GM18951 (cell line): ENCODE measurements at regions of chr13 and their contacts with region 1.

Region 1: DNA sequence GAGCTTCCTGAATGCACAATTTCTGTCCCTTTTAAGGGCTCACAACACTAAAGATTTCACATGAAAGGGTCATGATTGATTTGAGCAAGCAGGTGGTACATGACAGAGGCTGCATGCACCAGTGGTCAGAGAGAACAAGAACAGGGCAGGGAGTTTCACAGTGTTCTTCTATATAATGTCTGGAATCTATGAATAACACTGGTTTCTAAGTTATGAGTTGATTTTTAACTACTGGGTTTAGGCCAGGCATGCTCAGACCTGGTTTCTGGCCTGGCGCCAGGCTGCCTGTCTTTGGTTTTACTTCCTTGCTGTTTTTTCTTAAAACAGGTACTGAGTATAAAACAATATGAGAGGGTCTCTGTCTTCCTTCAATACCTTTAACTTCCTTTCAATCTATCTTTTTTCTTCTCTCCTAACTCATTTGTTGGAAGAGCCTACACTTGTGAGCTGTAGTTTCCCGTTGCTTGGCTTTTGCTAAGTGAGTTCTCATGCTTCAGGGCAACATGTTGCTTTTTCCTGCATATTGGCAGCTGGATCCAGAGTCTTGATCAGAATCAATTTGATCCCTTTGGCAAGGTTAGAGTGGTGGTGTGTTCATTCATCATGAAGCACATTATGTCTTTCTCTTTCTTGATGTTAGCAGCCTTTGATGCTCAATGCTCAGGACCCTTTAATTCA is 38.5 kb upstream of the FGF14 start:
- POLR2A ChIP-seq: no peak

Region 2: DNA sequence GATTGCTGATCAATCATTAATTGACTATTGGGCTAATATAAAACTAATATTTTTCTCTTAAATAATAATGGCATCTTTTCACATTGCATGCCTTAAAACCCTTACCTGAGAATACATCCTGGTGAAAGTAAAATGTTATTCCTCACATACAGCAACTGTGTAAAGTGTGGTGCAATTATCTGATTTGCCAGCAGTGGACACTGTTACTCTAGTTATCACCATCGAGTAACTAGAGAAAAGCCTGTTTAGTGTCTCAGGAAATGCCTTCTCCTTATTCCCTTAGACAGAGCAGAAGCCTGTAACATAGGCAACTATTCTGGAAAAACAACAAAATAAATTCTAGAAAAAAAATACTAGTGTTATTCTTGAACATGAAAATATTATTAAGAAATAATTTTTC is 498.4 kb before region 1 on chr13:
- in situ Hi-C with region 1: loop called (anchors 25 kb)
- POLR2A ChIP-seq: no peak

Region 3: GRCh38 chr13:102091231-102091630 is 349.2 kb before region 1 on chr13:
- in situ Hi-C with region 1: no loop called
- POLR2A ChIP-seq: no peak